SK-N-SH (cell line): ENCODE measurements at regions of chr2 and their contacts with region 1.

Region 1: GRCh38 chr2:152047819-152048471 is 50.9 kb downstream of the CACNB4 start:
- DNase-seq: peak; percentile 21
- H3K4me3 ChIP-seq: no peak overlapping the region
- H3K27ac ChIP-seq: no peak overlapping the region
- H3K4me1 ChIP-seq: peaks cover 0 to 4% of the 10 kb centered on the region in 2 experiments; a peak in 2 of 4 replicates
- H3K27me3 ChIP-seq: peaks cover 12% of the 10 kb centered on the region
- CTCF ChIP-seq: peak; percentile 52
- EP300 ChIP-seq: no peak
- RAD21 ChIP-seq: no peak

Region 2: GRCh38 chr2:152036611-152037469 is 11.1 kb before region 1 on chr2:
- CTCF ChIA-PET with region 1: interaction called, 26 read pairs
- POLR2A ChIA-PET with region 1: no interaction called
- DNase-seq: peak; percentile 66
- H3K4me3 ChIP-seq: no peak overlapping the region; a peak in 1 of 4 replicates
- H3K27ac ChIP-seq: no peak overlapping the region
- H3K4me1 ChIP-seq: no peaks in the 10 kb centered on the region; a peak in 1 of 4 replicates
- H3K27me3 ChIP-seq: no peaks in the 10 kb centered on the region
- CTCF ChIP-seq: peak; percentile 85
- EP300 ChIP-seq: no peak
- RAD21 ChIP-seq: peak; percentile 96